ENCODE measurements at regions of chr3 and their contacts with region 1.

Region 1: DNA sequence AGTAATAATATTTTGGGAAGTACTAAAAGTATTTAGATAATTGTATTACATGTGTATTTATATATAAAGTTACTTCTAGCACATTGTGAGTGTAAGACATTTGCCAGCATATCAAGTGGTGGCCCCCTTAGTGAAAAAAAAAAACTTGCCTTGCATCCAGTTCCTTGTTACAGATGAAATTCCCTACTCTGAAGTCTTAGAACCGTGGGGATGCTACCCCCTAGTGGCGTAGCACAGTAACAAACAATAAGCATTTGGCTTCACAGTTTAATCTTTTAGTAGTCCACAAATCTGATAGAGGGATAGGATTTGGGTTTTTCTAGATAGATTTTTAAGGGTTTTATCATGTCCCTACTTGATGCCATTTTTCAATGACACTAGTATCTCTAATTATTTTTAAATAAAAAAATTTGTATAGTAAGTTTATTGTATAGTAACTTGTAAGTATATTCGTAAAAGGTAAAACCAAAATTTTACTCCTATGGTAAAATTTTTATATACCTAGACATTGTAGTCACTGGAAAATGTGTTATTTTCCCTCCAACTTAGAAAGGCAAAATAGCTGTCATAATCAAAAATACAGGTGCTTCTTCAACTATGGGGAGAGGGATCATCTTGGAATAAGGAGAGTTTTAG is 14.3 kb downstream of the SMC4 start:
- DNase-seq: peak in 1 of 2 donors; percentile 44
- ATAC-seq: peak; percentile 73 to 83 (median 78)
- H3K4me3 ChIP-seq: no peak overlapping the region
- H3K27ac ChIP-seq: no peak overlapping the region
- H3K4me1 ChIP-seq: no peaks in the 10 kb centered on the region
- H3K27me3 ChIP-seq: no peaks in the 10 kb centered on the region
- CTCF ChIP-seq: peak; percentile 86

Region 2: GRCh38 chr3:160027541-160028195 is 386.1 kb before region 1 on chr3:
- intact Hi-C with region 1: loop called (anchors 2 to 5 kb)
- DNase-seq: no peak
- ATAC-seq: peak in 1 of 4 donors; percentile 39
- H3K4me3 ChIP-seq: no peak overlapping the region
- H3K27ac ChIP-seq: no peak overlapping the region
- H3K4me1 ChIP-seq: no peaks in the 10 kb centered on the region
- H3K27me3 ChIP-seq: no peaks in the 10 kb centered on the region
- CTCF ChIP-seq: no peak

Region 3: DNA sequence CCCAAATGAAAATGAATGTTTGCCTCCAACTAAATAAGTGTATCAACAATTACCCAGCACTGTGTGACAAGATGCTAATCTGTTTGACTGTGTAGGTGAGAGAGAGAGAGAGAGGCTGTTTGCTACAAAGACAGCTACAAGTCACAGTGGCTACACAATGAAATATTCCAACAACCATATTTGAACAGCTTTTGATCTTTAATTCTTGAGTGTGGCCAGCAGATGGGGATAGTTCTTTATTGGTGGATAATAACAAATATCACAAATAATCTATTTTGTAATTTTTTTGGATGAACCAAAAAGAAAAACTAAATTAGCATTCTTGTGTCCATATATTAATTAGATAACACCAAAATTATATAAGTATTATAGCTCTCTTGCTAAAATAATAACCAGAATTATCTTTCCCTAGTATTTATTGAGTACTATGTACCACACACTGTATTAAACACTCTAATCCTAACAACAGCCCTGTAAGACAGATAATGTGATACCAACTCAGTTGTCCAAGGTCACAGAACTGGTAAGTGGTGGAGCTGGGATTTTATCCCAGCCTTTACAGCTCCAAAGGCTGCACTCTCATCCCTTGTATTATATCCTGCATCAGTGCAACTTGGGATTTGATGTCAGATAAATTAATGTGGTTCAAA is 250.4 kb before region 1 on chr3:
- intact Hi-C with region 1: loop called in 1 of 2 experiments (anchors 5 kb)
- DNase-seq: no peak
- ATAC-seq: no peak
- H3K4me3 ChIP-seq: no peak overlapping the region
- H3K27ac ChIP-seq: no peak overlapping the region
- H3K4me1 ChIP-seq: no peaks in the 10 kb centered on the region
- H3K27me3 ChIP-seq: no peaks in the 10 kb centered on the region
- CTCF ChIP-seq: peak; percentile 40

Region 4: DNA sequence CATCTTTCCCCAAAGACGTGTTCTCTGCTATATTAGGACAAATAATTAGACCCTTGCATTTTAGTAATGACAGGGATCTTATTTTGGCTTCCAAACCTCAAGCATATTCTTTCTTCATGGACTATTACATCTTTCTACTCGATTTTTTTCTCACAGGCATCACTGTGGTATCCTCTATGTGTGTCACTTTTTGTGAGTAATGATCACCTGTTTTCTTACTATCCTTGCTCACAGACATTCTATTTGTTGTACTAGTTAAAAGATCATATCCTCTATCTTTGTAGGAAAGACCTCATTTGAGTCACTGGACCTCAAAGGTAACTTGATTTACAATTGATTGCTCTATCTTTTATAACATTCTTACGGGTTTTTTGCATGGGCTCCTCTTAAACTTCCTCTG is 181.7 kb before region 1 on chr3:
- intact Hi-C with region 1: no loop called
- DNase-seq: no peak
- ATAC-seq: no peak
- H3K4me3 ChIP-seq: no peak overlapping the region
- H3K27ac ChIP-seq: no peak overlapping the region
- H3K4me1 ChIP-seq: no peaks in the 10 kb centered on the region
- H3K27me3 ChIP-seq: peaks cover 0 to 43% (median 0%) of the 10 kb centered on the region in 3 donors
- CTCF ChIP-seq: no peak

Region 5: GRCh38 chr3:160372780-160373179 is 41.0 kb before region 1 on chr3:
- intact Hi-C with region 1: no loop called
- DNase-seq: no peak
- ATAC-seq: no peak
- H3K4me3 ChIP-seq: no peak overlapping the region
- H3K27ac ChIP-seq: no peak overlapping the region
- H3K4me1 ChIP-seq: no peaks in the 10 kb centered on the region
- H3K27me3 ChIP-seq: no peaks in the 10 kb centered on the region
- CTCF ChIP-seq: no peak

Measured in psoas muscle (tissue), 8 donors.